Calu3 (cell line): ENCODE measurements at regions of chr2 and their contacts with region 1.

Region 1: DNA sequence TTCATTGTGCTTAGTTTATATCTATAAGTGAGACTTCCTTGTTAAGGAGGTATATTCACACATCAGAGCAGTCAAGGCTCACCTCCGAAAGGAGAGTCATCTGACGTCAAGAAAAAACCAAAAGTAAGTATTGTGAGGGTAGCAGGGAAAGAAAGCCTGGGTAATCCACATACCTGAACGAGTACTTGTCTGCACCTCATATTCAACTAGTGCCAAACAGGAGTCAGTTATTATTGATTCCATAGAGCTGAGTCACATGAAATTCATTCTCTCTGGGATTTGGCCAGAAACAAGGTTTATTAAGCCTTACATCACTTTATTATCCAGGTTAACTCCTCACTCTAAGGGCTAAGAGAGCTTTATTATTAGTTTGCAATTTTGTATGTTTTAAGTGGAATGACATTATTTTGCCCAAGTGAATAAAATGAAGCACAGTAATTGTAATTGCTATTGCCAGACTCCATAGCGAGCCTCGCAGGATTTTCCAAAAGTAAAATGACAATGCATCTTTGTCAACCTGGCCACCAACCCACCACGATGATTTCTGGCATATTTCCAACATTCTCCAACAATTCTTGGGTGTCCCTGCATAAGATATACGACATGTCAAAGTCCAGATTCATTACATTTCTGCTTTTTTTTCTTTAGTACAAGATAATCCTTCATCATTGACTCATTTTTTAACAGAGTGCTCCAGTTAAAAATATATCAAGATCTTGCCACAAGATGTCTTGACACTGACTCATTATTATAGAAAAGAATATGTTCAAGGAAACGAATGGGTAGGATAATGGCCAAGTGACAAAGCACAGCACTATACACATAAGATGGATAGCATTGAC is 1210.4 kb upstream of the ACVR2A start:
- DNase-seq: peak; percentile 43
- H3K4me3 Mint-ChIP-seq: peak overlapping the region; percentile 50
- H3K27ac Mint-ChIP-seq: peak overlapping the region; percentile 73
- H3K4me1 Mint-ChIP-seq: peaks cover 14% of the 10 kb centered on the region
- H3K27me3 Mint-ChIP-seq: no peaks in the 10 kb centered on the region
- CTCF ChIP-seq: no peak

Region 2: DNA sequence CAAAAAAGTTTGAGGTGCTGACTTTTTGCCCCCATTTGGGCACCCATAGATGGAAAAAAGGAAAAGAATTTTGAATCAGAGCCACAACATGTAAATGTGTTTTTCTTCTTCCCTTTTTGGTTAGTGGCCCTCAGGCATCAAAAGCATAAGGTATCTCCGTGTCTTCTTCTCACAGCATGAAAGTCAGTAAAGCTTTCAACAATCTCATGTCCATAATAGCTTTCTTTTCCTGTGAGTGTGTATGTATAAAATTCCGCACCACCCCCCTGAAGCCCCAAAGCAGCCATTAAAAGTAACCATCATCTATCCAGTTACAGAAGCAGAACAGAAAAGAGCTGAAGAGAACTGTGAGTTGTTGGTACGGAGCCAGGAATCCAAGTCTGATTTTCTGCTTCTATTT is 329.3 kb before region 1 on chr2:
- CTCF ChIA-PET with region 1: no interaction called
- intact Hi-C with region 1: no loop called
- DNase-seq: no peak
- H3K4me3 Mint-ChIP-seq: no peak overlapping the region
- H3K27ac Mint-ChIP-seq: no peak overlapping the region
- H3K4me1 Mint-ChIP-seq: no peaks in the 10 kb centered on the region
- H3K27me3 Mint-ChIP-seq: no peaks in the 10 kb centered on the region
- CTCF ChIP-seq: no peak

Region 3: DNA sequence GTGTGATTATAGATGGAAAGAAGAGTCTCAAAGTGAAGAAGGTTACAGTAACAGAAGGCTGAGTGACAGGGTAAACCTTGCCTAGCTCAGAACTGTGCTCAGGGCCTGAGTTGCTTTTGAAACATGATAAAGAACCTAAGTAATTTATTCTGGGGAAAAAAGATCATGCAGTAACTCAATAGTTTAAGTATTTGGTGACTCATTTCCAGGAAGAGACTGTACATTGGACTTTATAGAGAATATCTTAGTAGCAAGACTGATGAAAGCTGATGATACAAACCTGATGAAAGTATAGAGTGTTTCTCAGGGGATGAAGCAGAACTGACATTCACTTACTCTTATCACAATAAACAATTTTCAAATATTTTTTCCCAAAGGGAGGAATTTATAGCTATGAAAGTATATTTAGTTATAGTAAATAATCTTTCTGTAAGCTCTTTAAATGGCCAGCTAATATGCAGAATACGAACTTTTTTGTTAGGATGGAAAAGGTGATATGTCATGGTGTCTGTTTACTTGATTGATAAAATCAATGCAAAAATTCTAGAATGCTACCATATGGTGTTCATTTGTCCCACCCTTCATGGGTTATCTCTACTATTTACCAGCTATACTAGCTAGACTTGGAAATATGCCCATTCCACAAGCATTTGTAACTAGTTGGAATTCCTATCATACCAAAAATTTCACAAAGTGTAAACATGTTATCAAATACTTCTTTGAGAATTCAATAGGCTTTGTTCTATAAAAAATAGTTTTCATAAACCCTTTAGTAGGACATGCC is 55.1 kb before region 1 on chr2:
- CTCF ChIA-PET with region 1: no interaction called
- intact Hi-C with region 1: loop called (anchors 1 kb)
- DNase-seq: no peak
- H3K4me3 Mint-ChIP-seq: no peak overlapping the region
- H3K27ac Mint-ChIP-seq: peak overlapping the region; percentile 68
- H3K4me1 Mint-ChIP-seq: peaks cover 18% of the 10 kb centered on the region
- H3K27me3 Mint-ChIP-seq: no peaks in the 10 kb centered on the region
- CTCF ChIP-seq: no peak